ENCODE measurements at regions of chr12 and their contacts with region 1.

Region 1: GRCh38 chr12:42958291-42958674 is 368.7 kb upstream of the PRICKLE1 start:
- DNase-seq: no peak

Region 2: DNA sequence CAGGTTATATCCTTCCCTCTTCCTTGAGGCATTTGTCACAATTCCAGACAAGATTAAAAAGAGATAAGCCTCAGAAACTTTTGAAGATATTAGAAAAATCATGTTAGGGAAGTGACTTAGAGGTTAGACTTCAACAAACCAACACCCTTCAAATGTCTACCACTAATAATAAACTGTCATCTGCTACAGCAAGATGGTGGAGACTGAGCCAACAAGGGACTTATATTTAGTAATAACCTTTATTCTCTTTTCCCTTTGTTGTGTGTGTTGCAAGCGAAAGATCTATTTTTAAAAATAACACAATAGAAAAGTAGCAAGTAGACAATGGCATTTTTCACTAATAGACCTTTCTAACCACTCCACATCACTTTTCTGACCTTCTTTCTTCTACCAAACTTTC is 397.3 kb before region 1 on chr12:
- intact Hi-C with region 1: no loop called
- DNase-seq: no peak

Region 3: DNA sequence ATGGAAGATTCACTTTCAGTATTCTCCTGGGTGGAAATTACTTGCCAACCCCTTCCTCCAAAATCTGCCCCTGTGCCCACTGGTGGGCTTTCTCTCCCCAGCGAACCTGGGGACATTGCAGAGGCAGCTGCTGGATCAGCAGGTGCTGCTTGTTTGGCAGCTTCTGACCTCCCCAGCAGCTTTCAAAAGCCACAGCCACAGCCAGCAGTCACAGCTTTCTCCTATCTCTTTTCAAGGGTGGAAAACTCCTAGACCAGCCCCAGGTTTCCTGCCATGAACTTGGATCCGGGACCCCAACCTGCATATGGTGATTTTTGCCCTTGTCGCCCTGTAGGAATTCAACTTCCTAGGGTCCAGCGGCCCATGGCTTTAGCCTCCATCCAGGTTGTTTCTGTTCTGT is 262.9 kb after region 1 on chr12:
- intact Hi-C with region 1: loop called (anchors 10 kb)
- DNase-seq: peak in 1 of 10 donors; percentile 31

Region 4: DNA sequence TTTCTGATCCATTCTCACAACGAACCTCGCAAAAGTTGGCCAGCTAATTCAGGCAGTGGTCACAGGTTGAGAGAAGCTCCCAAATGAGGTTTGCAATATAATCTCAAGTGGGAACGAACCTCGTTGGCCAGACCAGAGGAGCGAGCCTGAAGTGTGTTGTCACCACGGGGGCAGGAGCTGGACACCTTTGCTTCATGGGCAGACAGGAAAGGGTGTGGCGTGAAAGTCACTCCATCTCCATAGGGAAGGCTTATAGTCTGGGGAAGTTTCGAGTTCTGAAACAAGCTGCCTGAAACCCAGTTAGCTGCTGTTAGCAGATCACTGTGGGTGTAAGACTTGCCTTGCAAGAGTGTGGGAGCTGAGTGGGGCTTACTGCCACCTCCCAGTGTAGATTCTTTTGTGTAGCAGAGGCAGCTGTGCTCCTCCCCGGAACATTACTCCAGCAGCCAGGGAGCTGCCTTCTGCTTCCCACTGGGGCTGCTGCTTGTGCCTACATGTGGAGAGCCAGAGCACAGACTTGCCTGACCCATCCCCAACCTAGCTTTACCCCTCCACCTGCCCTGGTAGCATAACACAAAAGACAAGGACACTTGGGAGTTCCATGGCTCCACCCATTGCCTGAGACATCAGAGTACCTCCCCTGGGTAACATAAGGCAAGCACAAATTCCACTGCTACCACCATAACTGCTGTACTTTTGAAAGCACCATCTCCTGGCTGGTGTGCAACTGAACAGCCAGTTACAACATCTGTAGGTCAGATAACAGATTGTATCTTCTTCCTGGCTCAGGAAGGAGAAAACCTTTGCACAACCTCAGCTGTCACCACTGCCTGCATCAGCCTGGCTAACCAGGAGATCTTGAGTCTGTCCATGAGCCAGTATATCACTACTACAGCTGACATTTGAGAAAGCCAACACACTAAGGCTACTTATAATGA is 524.1 kb after region 1 on chr12:
- intact Hi-C with region 1: no loop called
- DNase-seq: peak in 1 of 10 donors; percentile 48